ENCODE measurements at regions of chr2 and their contacts with region 1.

Region 1: GRCh38 chr2:84925724-84926376 is 20.4 kb downstream of the TMSB10 start:
- DNase-seq: peak; percentile 99
- ATAC-seq: peak; percentile 88
- H3K4me3 Mint-ChIP-seq: peak overlapping the region; percentile 96
- H3K27ac Mint-ChIP-seq: peak overlapping the region; percentile 85
- H3K4me1 Mint-ChIP-seq: peaks cover 27% of the 10 kb centered on the region
- H3K27me3 Mint-ChIP-seq: no peaks in the 10 kb centered on the region

Region 2: GRCh38 chr2:84888401-84889276 is 37.2 kb before region 1 on chr2:
- POLR2A ChIA-PET with region 1: interaction called, 19 read pairs
- DNase-seq: peak; percentile 46
- ATAC-seq: peak; percentile 95
- H3K4me3 Mint-ChIP-seq: peak overlapping the region; percentile 89
- H3K27ac Mint-ChIP-seq: peak overlapping the region; percentile 99
- H3K4me1 Mint-ChIP-seq: peaks cover 62% of the 10 kb centered on the region
- H3K27me3 Mint-ChIP-seq: no peaks in the 10 kb centered on the region

Region 3: GRCh38 chr2:84946204-84947009 is 20.6 kb after region 1 on chr2:
- POLR2A ChIA-PET with region 1: interaction called, 19 read pairs
- DNase-seq: peak; percentile 66
- ATAC-seq: peak; percentile 90
- H3K4me3 Mint-ChIP-seq: peak overlapping the region; percentile 80
- H3K27ac Mint-ChIP-seq: peak overlapping the region; percentile 97
- H3K4me1 Mint-ChIP-seq: peaks cover 26% of the 10 kb centered on the region
- H3K27me3 Mint-ChIP-seq: no peaks in the 10 kb centered on the region

Measured in activated naive CD8-positive, alpha-beta T cell treated with anti-CD3 and anti-CD28 coated beads, Interleukin-2, amount 10 ng/mL, durations not matched to agents 7 days and 5 days (primary cell).